GM12878 (cell line): ENCODE measurements at regions of chr4 and their contacts with region 1.

Region 1: DNA sequence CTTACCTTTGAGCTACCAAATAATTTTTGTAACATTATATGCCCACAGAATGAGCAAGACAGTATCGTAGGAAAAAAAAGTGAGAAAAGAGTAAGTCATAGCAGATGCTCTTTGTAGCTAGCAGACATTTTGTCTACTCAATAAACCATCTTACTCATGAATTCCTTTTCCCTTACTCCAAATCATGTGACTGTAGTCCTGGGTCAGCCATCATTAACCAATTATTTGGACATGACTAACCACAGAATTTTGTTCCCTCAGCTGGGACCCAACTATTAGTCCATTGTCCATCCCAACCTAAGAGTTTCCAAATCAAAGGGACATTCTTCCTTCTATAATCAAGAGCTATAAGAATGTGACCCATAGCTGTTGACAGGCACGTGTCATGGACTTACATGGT is 11.4 kb downstream of the UBE2D3 start:
- DNase-seq: no peak
- ATAC-seq: no peak
- H3K4me3 ChIP-seq: no peak overlapping the region; the same call in 1 of the 2 replicates
- H3K27ac ChIP-seq: no peak overlapping the region
- H3K4me1 ChIP-seq: peaks cover 5% of the 10 kb centered on the region
- H3K27me3 ChIP-seq: no peaks in the 10 kb centered on the region
- CTCF ChIP-seq: no peak
- EP300 ChIP-seq: no peak
- POLR2A ChIP-seq: no peak
- RAD21 ChIP-seq: no peak

Region 2: GRCh38 chr4:102439236-102439614 is 376.8 kb before region 1 on chr4:
- CTCF ChIA-PET with region 1: no interaction called
- POLR2A ChIA-PET with region 1: no interaction called
- RAD21 ChIA-PET with region 1: no interaction called
- SMC1A ChIA-PET with region 1: interaction called, 3 read pairs
- in situ Hi-C with region 1: no loop called
- intact Hi-C with region 1: loop called (anchors 10 kb)
- DNase-seq: no peak
- ATAC-seq: no peak
- H3K4me3 ChIP-seq: no peak overlapping the region
- H3K27ac ChIP-seq: no peak overlapping the region
- H3K4me1 ChIP-seq: no peaks in the 10 kb centered on the region
- H3K27me3 ChIP-seq: no peaks in the 10 kb centered on the region
- CTCF ChIP-seq: no peak
- EP300 ChIP-seq: no peak
- POLR2A ChIP-seq: no peak
- RAD21 ChIP-seq: no peak

Region 3: GRCh38 chr4:103019308-103020124 is 203.5 kb after region 1 on chr4 and contains the start of gene SLC9B1:
- CTCF ChIA-PET with region 1: no interaction called
- POLR2A ChIA-PET with region 1: no interaction called
- RAD21 ChIA-PET with region 1: no interaction called
- SMC1A ChIA-PET with region 1: no interaction called
- in situ Hi-C with region 1: loop called (anchors 25 kb)
- intact Hi-C with region 1: no loop called
- DNase-seq: peak; percentile 56
- ATAC-seq: peak; percentile 99
- H3K4me3 ChIP-seq: peak within 1 kb of the TSS; percentile 83
- H3K27ac ChIP-seq: peak within 1 kb of the TSS; percentile 87
- H3K4me1 ChIP-seq: peaks cover 5% of the 10 kb centered on the region; the same call in 1 of the 2 replicates
- H3K27me3 ChIP-seq: no peaks in the 10 kb centered on the region
- CTCF ChIP-seq: no peak
- EP300 ChIP-seq: no peak
- POLR2A ChIP-seq: peak; percentile 93
- RAD21 ChIP-seq: no peak
- polyA plus RNA-seq, gene SLC9B1: 1.9 to 2.1 TPM